ENCODE measurements at regions of chr1 and their contacts with region 1.

Region 1: DNA sequence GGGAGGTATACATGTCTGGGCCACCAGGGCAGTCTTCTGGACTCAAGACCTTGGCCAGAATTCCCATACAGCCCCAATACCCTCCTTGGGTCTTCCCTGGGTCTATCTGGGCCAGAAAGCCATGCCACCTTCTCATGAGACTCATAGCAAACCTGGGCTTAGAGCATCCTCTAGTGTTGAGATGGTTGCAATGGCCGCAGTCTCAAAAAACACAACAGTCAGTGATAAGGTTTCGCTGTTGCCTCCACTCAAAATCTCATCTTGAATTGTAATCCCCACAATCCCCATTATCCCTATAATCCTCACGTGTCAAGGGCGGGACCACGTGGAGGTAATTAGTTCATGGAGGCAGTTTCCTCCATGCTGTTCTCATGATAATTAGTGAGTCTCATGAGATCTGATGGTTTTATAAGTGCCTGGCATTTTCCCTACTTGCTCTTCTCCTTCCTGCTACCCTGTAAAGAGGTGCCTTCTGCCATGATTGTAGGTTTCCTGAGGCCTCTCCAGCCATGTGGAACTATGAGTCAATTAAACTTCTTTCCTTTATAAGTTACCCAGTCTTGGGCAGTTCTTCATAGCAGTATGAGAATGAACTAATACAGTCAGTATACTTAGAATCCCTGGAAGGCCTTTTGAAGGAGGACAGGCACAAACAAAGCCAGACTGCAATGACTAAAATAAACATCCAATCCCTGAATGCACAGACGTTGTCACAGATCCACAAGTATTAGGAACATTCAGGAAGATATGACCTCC is 77.0 kb downstream of the CTH start:
- DNase-seq: peak in 2 of 10 donors; percentile 28 to 65

Region 2: DNA sequence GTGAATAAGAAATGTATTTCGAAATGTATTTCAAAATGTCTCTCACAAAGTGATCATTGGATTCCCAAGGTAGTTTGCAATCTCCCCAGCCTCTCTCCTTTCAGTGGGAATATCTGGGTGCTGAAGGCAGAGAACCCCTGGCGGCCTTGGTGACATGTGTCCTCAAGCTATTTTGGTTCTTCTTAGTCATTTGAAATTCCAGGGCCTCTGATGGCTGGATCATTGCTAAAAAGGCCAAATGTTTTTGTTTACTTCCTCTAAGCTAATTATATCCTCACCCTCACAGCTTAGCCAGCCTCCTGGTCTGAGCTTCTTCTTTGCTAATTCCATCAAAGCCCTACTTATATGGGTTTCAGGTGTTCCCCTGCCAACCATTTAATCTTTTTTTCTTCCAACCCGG is 353.9 kb before region 1 on chr1:
- intact Hi-C with region 1: loop called (anchors 5 kb)
- DNase-seq: no peak

Region 3: DNA sequence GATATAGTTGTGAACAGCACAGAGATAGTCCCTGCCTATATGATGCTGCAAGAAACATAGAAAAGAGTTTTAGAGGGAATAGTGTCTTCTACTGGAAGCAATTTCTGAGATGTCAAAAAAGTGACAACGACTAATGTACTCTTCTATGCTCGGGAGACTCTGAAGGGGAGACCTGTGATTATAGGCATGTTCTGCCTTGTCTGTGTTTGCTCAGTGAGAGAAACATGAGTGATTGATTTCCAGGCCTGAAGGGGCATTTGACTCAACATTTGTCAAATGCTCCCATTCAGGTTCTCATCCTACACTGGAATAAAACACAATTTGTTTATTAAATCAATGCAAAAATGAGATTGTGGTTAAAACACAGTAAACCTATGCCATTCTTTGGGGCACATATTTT is 54.8 kb after region 1 on chr1:
- intact Hi-C with region 1: no loop called
- DNase-seq: no peak

Region 4: DNA sequence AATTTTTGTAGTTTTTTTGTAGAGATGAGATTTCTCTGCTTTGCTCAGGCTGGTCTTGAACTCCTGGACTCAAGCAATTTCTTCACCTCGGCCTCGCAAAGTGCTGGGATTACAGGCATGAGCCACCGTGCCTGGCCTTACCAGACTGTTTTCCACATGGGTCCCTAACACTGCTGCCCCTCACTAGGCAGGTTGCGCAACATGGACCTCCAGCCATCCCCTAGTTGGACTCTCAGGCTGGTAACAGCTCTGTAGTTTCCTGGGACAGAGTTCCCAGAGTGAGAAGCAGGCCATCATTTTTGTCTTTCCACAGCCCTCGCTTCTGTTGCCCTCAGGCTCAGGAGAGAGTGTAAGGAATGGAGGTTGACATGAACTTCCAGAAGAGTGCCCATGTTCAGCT is 79.1 kb after region 1 on chr1:
- intact Hi-C with region 1: no loop called
- DNase-seq: peak in 1 of 10 donors; percentile 45

Measured in posterior cingulate gyrus (tissue), 11 donors.